ENCODE measurements at regions of chr1 and their contacts with region 1.

Region 1: GRCh38 chr1:56578963-56579875 is at the start of gene PLPP3:
- DNase-seq: peak; percentile 85
- H3K4me3 ChIP-seq: peak within 1 kb of the TSS; percentile 77 to 94 (median 80)
- H3K27ac ChIP-seq: peak within 1 kb of the TSS; percentile 7
- H3K4me1 ChIP-seq: peaks cover 7% of the 10 kb centered on the region
- H3K27me3 ChIP-seq: no peaks in the 10 kb centered on the region
- CTCF ChIP-seq: peak; percentile 18 to 37
- total RNA-seq, gene PLPP3: 1.3 to 16.2 TPM

Region 2: GRCh38 chr1:55478742-55479141 is 1100.5 kb before region 1 on chr1:
- CTCF ChIA-PET with region 1: no interaction called
- dilution Hi-C with region 1: no loop called
- in situ Hi-C with region 1: loop called in 1 of 2 experiments (anchors 25 kb)
- intact Hi-C with region 1: no loop called
- DNase-seq: peak; percentile 21
- H3K4me3 ChIP-seq: no peak overlapping the region
- H3K27ac ChIP-seq: no peak overlapping the region
- H3K4me1 ChIP-seq: peaks cover 3% of the 10 kb centered on the region
- H3K27me3 ChIP-seq: no peaks in the 10 kb centered on the region
- CTCF ChIP-seq: peak; percentile 43

Region 3: GRCh38 chr1:56120021-56120420 is 459.2 kb before region 1 on chr1:
- CTCF ChIA-PET with region 1: no interaction called
- dilution Hi-C with region 1: no loop called
- in situ Hi-C with region 1: no loop called
- intact Hi-C with region 1: loop called (anchors 10 kb)
- DNase-seq: no peak
- H3K4me3 ChIP-seq: no peak overlapping the region
- H3K27ac ChIP-seq: no peak overlapping the region
- H3K4me1 ChIP-seq: peaks cover 5% of the 10 kb centered on the region
- H3K27me3 ChIP-seq: no peaks in the 10 kb centered on the region
- CTCF ChIP-seq: no peak

Region 4: GRCh38 chr1:56409094-56409691 is 170.0 kb before region 1 on chr1:
- CTCF ChIA-PET with region 1: no interaction called
- dilution Hi-C with region 1: no loop called
- in situ Hi-C with region 1: loop called (anchors 10 to 25 kb)
- intact Hi-C with region 1: loop called (anchors 1 kb)
- DNase-seq: peak; percentile 27
- H3K4me3 ChIP-seq: no peak overlapping the region
- H3K27ac ChIP-seq: no peak overlapping the region
- H3K4me1 ChIP-seq: no peaks in the 10 kb centered on the region
- H3K27me3 ChIP-seq: no peaks in the 10 kb centered on the region
- CTCF ChIP-seq: peak; percentile 62 to 83

Region 5: DNA sequence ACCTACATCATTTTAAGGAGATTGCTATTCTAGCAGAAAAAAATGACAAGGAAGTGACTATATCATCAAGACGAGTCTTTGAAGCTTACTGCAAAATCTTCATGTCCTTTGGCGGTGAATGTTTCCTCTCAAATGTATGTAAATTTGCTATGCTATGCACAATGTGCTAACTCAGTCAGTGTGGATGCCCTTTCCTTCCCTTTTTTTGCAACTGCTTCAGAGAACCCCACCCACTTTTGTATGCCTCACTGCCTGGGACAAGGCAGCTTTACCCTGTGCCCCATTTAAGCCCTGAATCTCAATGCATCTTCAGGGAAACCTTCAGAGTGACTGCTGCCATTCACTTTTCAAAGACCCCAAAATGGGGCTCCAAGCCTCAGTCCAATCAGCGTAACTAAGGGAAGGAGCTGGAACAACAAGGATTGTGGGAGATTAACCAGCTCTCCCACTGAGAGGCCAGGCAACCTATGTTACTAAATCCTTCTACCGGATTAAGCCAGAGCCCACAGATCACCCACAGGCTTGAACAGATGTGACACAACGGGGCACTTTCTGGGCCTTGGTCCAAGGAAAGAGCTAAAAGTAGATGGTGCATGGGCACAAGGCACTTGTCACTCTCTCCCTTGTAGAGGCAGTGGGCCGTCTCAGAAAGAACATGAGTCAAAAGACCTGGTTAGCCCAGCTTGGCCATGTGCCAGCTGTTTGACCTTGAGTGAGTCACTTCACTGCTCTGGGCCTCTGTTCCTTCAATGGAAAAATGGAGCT is 154.3 kb before region 1 on chr1:
- CTCF ChIA-PET with region 1: no interaction called
- dilution Hi-C with region 1: no loop called
- in situ Hi-C with region 1: loop called in 1 of 2 experiments (anchors 25 kb)
- intact Hi-C with region 1: no loop called
- DNase-seq: peak; percentile 37
- H3K4me3 ChIP-seq: no peak overlapping the region
- H3K27ac ChIP-seq: no peak overlapping the region
- H3K4me1 ChIP-seq: no peaks in the 10 kb centered on the region
- H3K27me3 ChIP-seq: no peaks in the 10 kb centered on the region
- CTCF ChIP-seq: no peak

Region 6: DNA sequence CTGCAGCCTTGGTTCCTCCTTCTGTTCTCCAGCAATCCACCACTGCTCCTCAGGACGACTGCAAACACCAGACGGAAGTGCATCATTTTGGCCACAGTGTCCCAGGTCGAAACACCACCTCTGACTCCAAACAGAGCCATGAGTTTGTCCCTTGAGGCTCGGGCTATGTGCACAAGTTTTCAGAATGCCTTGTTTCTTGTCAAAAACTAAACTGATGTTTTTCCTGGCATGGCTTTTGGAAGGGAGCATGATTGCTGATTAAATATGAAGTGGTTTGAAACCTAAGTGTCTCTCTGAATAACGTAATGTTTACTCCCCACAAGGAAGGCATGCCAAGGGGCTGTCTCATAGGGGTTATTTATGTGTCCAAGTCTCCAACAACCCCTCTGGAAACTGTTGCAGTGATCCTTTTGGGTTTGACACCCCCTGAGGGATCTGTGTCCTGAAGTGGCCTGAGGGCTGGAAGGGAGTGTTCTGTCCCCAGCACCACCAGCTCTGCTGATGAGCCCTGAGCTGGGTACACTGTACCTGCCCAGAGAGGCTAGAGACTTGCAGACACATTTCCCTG is 132.6 kb before region 1 on chr1:
- CTCF ChIA-PET with region 1: no interaction called
- dilution Hi-C with region 1: no loop called
- in situ Hi-C with region 1: no loop called
- intact Hi-C with region 1: no loop called
- DNase-seq: no peak
- H3K4me3 ChIP-seq: no peak overlapping the region
- H3K27ac ChIP-seq: no peak overlapping the region
- H3K4me1 ChIP-seq: no peaks in the 10 kb centered on the region
- H3K27me3 ChIP-seq: no peaks in the 10 kb centered on the region
- CTCF ChIP-seq: no peak

Region 7: GRCh38 chr1:56472860-56473259 is 106.4 kb before region 1 on chr1:
- CTCF ChIA-PET with region 1: interaction called, 4 read pairs
- dilution Hi-C with region 1: no loop called
- in situ Hi-C with region 1: no loop called
- intact Hi-C with region 1: loop called (anchors 5 kb)
- DNase-seq: no peak
- H3K4me3 ChIP-seq: no peak overlapping the region
- H3K27ac ChIP-seq: no peak overlapping the region
- H3K4me1 ChIP-seq: no peaks in the 10 kb centered on the region
- H3K27me3 ChIP-seq: no peaks in the 10 kb centered on the region
- CTCF ChIP-seq: no peak

Measured in mammary epithelial cell (primary cell).